Right ventricle myocardium superior (tissue), 1 donor: ENCODE measurements at regions of chr2 and their contacts with region 1.

Region 1: DNA sequence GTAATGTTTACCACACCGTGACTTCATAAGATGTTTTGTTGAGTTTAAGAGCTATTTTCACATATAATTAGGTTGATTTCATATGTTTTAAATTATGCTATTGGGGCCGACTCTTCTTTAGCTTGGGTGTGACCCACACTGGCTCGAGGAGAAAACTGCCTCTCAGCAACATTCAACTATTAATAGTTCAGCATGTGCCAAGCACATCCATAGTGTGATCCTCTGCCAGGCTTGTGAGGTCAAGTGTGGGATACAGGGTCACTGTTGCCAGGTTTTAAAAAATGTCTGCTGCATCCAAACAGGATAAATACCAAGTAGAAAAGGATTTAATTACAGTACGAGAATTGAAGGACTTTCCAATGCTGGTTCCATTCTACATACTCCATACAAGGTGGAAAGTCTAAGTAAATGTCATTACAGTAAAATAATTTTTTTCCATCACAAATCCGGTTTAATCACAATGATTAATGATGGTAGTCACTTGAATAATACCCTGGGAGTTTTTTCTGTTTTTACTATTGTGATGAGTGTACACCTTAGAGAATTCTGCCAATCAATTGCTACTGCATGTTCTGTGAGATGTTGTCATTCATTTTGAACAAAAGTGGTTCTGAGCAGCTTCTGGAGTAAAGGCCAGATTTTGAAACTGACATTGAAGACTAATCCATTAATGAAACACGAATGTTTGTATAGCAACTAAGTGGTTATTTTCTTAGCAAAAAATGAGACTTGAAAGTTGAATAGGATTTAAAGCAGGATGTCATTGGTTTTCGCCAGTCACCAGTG is 84.5 kb downstream of the ABI2 start:
- DNase-seq: no peak
- ATAC-seq: peak; percentile 98

Region 2: DNA sequence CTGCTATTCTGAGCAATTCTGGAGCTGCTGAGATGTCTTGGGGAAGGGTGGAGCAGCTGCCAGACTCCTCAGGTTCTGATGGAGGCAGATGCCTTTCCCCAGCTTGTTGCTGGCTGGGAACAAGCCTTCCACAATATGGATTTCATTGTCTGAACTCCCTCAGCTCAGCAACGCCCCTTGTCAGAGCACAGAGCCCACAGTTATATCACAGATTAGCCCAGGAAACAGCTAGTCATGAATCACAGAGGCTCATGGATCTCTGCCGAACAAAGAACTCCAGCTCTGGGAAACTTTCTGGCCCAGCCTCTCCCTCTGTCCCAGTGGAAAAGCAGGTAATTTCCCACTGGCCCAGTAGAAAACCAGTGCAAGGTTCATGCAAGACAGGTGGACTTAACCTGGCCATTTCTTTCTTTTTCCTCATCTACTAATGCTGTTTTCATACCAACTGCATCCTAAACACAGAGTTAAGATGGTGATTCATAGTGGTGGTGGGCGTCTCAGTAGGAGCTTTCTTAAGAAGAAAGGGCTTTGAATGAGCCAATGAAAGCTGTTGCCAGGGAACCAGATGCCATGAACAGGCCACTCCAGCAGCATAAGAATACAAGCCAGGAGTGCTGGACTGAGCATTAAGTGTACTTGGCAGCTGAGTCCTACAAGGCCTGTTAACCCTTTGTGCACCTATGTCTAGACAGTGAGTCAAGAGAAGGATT is 1348.4 kb before region 1 on chr2:
- intact Hi-C with region 1: no loop called
- DNase-seq: no peak
- ATAC-seq: peak; percentile 88

Region 3: GRCh38 chr2:203252818-203253217 is 159.9 kb before region 1 on chr2:
- intact Hi-C with region 1: no loop called
- DNase-seq: no peak
- ATAC-seq: no peak

Region 4: DNA sequence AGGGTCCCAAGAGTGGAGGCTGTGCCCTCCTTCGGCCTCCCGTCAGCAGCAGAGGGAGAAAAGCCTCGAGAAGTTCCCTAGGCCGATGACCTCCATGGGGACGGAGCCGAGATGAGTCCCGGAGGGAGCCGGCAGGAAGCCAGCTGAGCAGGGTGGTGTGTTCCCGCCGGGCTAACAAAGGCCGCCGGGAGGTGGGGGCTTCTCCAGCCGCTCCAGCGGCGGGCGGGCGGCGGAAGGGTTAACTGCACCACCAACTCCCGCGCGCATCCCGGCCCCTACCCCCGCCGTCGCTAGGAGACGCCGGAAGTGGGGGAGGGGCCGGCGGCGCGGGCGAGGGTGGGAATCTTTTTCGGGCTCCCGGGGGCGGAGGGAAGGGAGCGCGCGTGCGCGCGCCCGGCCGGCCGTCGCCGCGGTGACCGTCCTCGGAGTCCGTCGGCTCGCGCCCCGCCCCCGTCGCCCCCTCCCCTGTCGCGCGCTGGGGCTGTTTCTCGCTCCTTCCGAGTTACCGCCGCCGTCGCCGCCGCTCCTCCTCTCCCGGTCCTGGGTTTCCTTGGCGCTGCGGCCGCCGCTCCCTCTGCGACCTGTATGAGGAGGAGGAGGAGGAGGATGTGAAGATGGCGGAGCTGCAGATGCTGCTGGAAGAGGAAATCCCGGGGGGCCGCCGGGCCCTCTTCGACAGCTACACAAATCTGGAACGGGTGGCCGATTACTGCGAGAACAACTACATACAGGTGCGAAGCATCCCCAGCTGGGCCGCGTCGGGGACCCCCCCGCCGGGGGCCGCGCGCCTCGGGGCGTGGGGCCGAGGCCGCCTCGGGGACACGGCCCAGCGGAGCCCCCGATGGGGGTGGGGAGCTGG is 84.6 kb before region 1 on chr2 and contains the start of gene ABI2:
- intact Hi-C with region 1: loop called (anchors 10 kb)
- DNase-seq: peak; percentile 91
- ATAC-seq: peak; percentile 96
- total RNA-seq, gene ABI2: 44.7 TPM